ENCODE measurements at regions of chr6 and their contacts with region 1.

Region 1: GRCh38 chr6:149545754-149546528 is at the start of gene PPIL4:
- DNase-seq: peak; percentile 93 to 99 (median 96)
- ATAC-seq: peak; percentile 88
- H3K4me3 ChIP-seq: peak within 1 kb of the TSS; percentile 86 to 92
- H3K4me3 Mint-ChIP-seq: peak within 1 kb of the TSS; percentile 100
- H3K27ac ChIP-seq: peak within 1 kb of the TSS; percentile 99 to 100
- H3K27ac Mint-ChIP-seq: peak within 1 kb of the TSS; percentile 100
- H3K4me1 ChIP-seq: peaks cover 23% of the 10 kb centered on the region
- H3K4me1 Mint-ChIP-seq: peaks cover 38% of the 10 kb centered on the region
- H3K27me3 ChIP-seq: no peaks in the 10 kb centered on the region
- H3K27me3 Mint-ChIP-seq: no peaks in the 10 kb centered on the region
- CTCF ChIP-seq: peak; percentile 98
- total RNA-seq, gene PPIL4: 59.1 to 59.4 TPM

Region 2: DNA sequence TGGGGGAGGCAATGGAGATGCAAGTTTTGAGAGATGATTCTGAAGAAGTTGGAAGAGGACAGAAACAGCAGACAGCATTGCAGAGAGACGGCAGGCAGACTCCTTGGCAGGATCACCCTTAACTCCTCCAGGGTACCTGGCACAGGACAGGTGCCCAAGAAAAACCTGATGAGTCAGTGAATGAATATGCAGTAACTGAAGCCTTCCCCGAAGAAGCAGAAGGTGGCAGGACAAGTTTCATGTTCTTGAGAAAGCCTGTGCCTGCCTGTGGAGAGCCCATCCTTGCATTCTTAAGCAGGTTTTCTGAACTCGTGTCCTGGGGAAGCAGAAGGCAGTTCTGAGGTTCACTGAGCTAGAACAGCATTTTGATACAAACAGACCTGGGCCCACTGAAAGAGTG is 1282.9 kb before region 1 on chr6:
- CTCF ChIA-PET with region 1: no interaction called
- POLR2A ChIA-PET with region 1: no interaction called
- intact Hi-C with region 1: no loop called
- DNase-seq: no peak
- ATAC-seq: no peak
- H3K4me3 ChIP-seq: no peak overlapping the region
- H3K4me3 Mint-ChIP-seq: no peak overlapping the region
- H3K27ac ChIP-seq: no peak overlapping the region
- H3K27ac Mint-ChIP-seq: no peak overlapping the region
- H3K4me1 ChIP-seq: no peaks in the 10 kb centered on the region
- H3K4me1 Mint-ChIP-seq: no peaks in the 10 kb centered on the region
- H3K27me3 ChIP-seq: no peaks in the 10 kb centered on the region
- H3K27me3 Mint-ChIP-seq: peaks cover 16% of the 10 kb centered on the region
- CTCF ChIP-seq: no peak

Region 3: DNA sequence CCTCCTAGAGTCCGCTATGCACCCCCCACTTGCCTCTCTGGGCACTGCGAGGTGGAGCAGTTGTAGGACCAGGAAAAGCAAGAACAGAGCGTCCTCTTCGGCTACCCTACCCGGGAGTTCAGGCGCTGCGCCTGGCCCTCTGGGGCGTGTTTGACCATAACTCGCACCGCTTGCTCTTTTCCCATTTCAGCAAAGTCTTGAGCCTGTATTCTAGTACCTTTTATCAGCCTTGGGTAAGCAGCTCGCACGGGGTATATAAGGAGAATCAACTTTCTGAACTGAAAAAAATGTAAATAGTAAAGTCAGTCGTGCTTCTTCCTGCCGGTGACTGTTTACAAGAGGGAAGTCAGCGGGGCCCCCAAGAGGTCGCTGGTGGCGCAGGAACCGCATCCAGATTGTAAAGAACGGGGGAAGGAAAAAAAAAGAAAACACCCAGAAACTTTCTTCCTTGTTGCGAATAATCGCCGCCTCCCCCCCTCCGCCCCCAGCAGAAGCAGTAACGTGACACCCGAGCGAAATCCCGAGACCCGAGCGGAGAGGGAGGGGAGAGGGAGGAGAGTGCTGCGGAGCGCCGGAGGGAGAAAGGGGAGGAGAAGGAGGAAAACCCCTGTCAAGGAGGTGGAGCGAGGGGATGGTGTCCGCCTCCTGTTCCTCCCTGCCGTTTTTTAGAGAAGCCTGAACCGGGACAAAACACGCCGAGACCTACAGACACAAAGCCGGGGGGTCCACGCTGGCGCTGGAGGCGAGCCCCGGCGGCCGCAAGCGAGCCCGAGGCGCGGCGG is 799.4 kb before region 1 on chr6 and contains the start of gene UST:
- CTCF ChIA-PET with region 1: no interaction called
- POLR2A ChIA-PET with region 1: no interaction called
- intact Hi-C with region 1: loop called in 1 of 2 experiments (anchors 5 kb)
- DNase-seq: peak; percentile 48 to 89 (median 70)
- ATAC-seq: peak; percentile 61
- H3K4me3 ChIP-seq: peak within 1 kb of the TSS; percentile 76 to 86
- H3K4me3 Mint-ChIP-seq: peak within 1 kb of the TSS; percentile 94
- H3K27ac ChIP-seq: peak within 1 kb of the TSS in 1 of 2 experiments; percentile 63
- H3K27ac Mint-ChIP-seq: peak within 1 kb of the TSS; percentile 90
- H3K4me1 ChIP-seq: peaks cover 11% of the 10 kb centered on the region
- H3K4me1 Mint-ChIP-seq: peaks cover 26% of the 10 kb centered on the region
- H3K27me3 ChIP-seq: no peaks in the 10 kb centered on the region
- H3K27me3 Mint-ChIP-seq: peaks cover 19% of the 10 kb centered on the region
- CTCF ChIP-seq: peak; percentile 57
- total RNA-seq, gene UST: 0.90 to 1.0 TPM

Region 4: GRCh38 chr6:149484733-149485700 is 60.9 kb before region 1 on chr6 and contains the start of gene ZC3H12D:
- CTCF ChIA-PET with region 1: interaction called, 3 read pairs
- POLR2A ChIA-PET with region 1: interaction called, 4 read pairs
- intact Hi-C with region 1: loop called in 1 of 2 experiments (anchors 1 kb)
- DNase-seq: peak; percentile 65 to 93 (median 82)
- ATAC-seq: peak; percentile 80
- H3K4me3 ChIP-seq: peak within 1 kb of the TSS; percentile 45 to 55
- H3K4me3 Mint-ChIP-seq: peak within 1 kb of the TSS; percentile 86
- H3K27ac ChIP-seq: peak within 1 kb of the TSS; percentile 69 to 92
- H3K27ac Mint-ChIP-seq: peak within 1 kb of the TSS; percentile 95
- H3K4me1 ChIP-seq: peaks cover 43% of the 10 kb centered on the region
- H3K4me1 Mint-ChIP-seq: peaks cover 63% of the 10 kb centered on the region
- H3K27me3 ChIP-seq: no peaks in the 10 kb centered on the region
- H3K27me3 Mint-ChIP-seq: no peaks in the 10 kb centered on the region
- CTCF ChIP-seq: peak; percentile 66
- total RNA-seq, gene ZC3H12D: 45.9 to 50.0 TPM

Region 5: GRCh38 chr6:149648148-149649145 is 102.5 kb after region 1 on chr6 and contains the start of gene KATNA1:
- CTCF ChIA-PET with region 1: no interaction called
- POLR2A ChIA-PET with region 1: no interaction called
- intact Hi-C with region 1: loop called (anchors 1 kb)
- DNase-seq: peak; percentile 65 to 91 (median 84)
- ATAC-seq: peak; percentile 91
- H3K4me3 ChIP-seq: peak within 1 kb of the TSS; percentile 78 to 97
- H3K4me3 Mint-ChIP-seq: peak within 1 kb of the TSS; percentile 90
- H3K27ac ChIP-seq: peak within 1 kb of the TSS; percentile 77 to 90
- H3K27ac Mint-ChIP-seq: peak within 1 kb of the TSS; percentile 63
- H3K4me1 ChIP-seq: peaks cover 30% of the 10 kb centered on the region
- H3K4me1 Mint-ChIP-seq: peaks cover 37% of the 10 kb centered on the region
- H3K27me3 ChIP-seq: no peaks in the 10 kb centered on the region
- H3K27me3 Mint-ChIP-seq: no peaks in the 10 kb centered on the region
- CTCF ChIP-seq: no peak
- total RNA-seq, gene KATNA1: 18.0 to 20.8 TPM

Region 6: GRCh38 chr6:149746147-149746946 is 200.4 kb after region 1 on chr6 and contains the start of gene NUP43:
- CTCF ChIA-PET with region 1: interaction called, 3 read pairs
- POLR2A ChIA-PET with region 1: interaction called, 3 read pairs
- intact Hi-C with region 1: loop called (anchors 1 to 5 kb)
- DNase-seq: peak; percentile 85 to 95 (median 93)
- ATAC-seq: peak; percentile 74
- H3K4me3 ChIP-seq: peak within 1 kb of the TSS; percentile 69 to 79
- H3K4me3 Mint-ChIP-seq: peak within 1 kb of the TSS; percentile 97
- H3K27ac ChIP-seq: peak within 1 kb of the TSS; percentile 55 to 58
- H3K27ac Mint-ChIP-seq: peak within 1 kb of the TSS; percentile 94
- H3K4me1 ChIP-seq: peaks cover 31% of the 10 kb centered on the region
- H3K4me1 Mint-ChIP-seq: peaks cover 30% of the 10 kb centered on the region
- H3K27me3 ChIP-seq: no peaks in the 10 kb centered on the region
- H3K27me3 Mint-ChIP-seq: no peaks in the 10 kb centered on the region
- CTCF ChIP-seq: peak; percentile 54
- total RNA-seq, gene NUP43: 9.7 to 10.3 TPM

Region 7: GRCh38 chr6:149925974-149926777 is 380.2 kb after region 1 on chr6:
- CTCF ChIA-PET with region 1: no interaction called
- POLR2A ChIA-PET with region 1: no interaction called
- intact Hi-C with region 1: loop called (anchors 5 kb)
- DNase-seq: peak; percentile 46 to 79 (median 72)
- ATAC-seq: peak; percentile 57
- H3K4me3 ChIP-seq: peak overlapping the region in 1 of 2 experiments; percentile 38
- H3K4me3 Mint-ChIP-seq: no peak overlapping the region
- H3K27ac ChIP-seq: no peak overlapping the region
- H3K27ac Mint-ChIP-seq: no peak overlapping the region
- H3K4me1 ChIP-seq: peaks cover 17% of the 10 kb centered on the region
- H3K4me1 Mint-ChIP-seq: peaks cover 34% of the 10 kb centered on the region
- H3K27me3 ChIP-seq: peaks cover 31 to 50% of the 10 kb centered on the region in 2 experiments
- H3K27me3 Mint-ChIP-seq: peaks cover 81% of the 10 kb centered on the region
- CTCF ChIP-seq: peak; percentile 78

Region 8: GRCh38 chr6:150119173-150119572 is 573.2 kb after region 1 on chr6:
- CTCF ChIA-PET with region 1: no interaction called
- POLR2A ChIA-PET with region 1: no interaction called
- intact Hi-C with region 1: no loop called
- DNase-seq: no peak
- ATAC-seq: no peak
- H3K4me3 ChIP-seq: no peak overlapping the region
- H3K4me3 Mint-ChIP-seq: no peak overlapping the region
- H3K27ac ChIP-seq: no peak overlapping the region
- H3K27ac Mint-ChIP-seq: no peak overlapping the region
- H3K4me1 ChIP-seq: no peaks in the 10 kb centered on the region
- H3K4me1 Mint-ChIP-seq: peaks cover 3% of the 10 kb centered on the region
- H3K27me3 ChIP-seq: no peaks in the 10 kb centered on the region
- H3K27me3 Mint-ChIP-seq: peaks cover 6% of the 10 kb centered on the region
- CTCF ChIP-seq: no peak